AG04450 (cell line): ENCODE measurements at regions of chr2 and their contacts with region 1.

Region 1: DNA sequence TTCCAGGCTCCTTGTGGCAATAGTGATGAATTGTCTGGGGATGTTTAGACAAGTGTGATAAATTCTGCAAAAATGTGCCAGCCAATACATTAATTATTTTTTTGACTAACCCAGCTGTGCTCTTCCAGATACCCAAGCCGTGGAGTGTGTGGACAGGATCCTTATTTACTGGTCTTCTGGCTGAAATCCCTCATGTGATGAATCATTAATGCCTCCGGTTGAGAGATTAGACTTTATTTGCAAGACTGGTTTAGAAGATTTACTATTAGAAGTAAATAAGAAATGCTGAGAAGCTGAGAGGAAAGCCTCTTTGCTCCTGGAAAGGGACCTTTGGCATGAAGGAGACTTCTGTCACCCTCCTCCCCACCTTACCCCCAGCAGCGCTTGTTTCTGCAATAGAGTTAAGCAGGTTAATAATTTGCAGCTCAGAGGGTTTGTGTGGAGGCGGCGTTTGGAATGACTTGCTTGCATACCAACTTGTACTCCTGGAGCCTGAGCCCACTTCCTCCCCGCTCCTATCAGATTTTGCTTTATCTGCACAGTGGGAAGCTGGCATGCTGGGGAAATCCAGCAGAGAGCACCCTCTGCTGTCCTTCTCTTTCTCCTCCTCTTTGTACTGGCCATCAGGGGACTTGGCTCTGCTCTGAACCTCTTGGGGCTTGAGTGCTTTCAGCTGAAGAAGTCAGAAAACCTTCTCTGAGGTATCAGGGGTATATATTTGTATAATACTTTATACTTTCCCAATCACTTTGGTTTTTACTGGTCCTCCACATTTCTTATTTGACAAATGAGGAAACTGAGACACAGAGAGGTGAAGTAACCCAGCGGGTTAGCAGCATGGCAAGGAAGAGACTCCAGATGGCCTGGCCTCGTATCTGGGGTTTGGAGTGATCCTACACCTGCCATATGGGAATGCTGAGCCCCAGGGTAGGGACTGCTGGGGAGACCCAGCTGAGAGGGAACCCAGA is 16.3 kb downstream of the SLC3A1 start:
- DNase-seq: peak; percentile 41
- H3K4me3 ChIP-seq: no peak overlapping the region; the same call in 1 of the 2 replicates
- H3K27ac ChIP-seq: peak overlapping the region; percentile 24
- H3K27me3 ChIP-seq: peaks cover 15% of the 10 kb centered on the region
- CTCF ChIP-seq: peak; percentile 77

Region 2: GRCh38 chr2:44184106-44184505 is 107.5 kb before region 1 on chr2:
- CTCF ChIA-PET with region 1: no interaction called
- POLR2A ChIA-PET with region 1: no interaction called
- DNase-seq: no peak
- H3K4me3 ChIP-seq: no peak overlapping the region
- H3K27ac ChIP-seq: no peak overlapping the region
- H3K27me3 ChIP-seq: no peaks in the 10 kb centered on the region
- CTCF ChIP-seq: no peak

Region 3: GRCh38 chr2:44244129-44244871 is 47.3 kb before region 1 on chr2:
- CTCF ChIA-PET with region 1: interaction called, 11 read pairs
- POLR2A ChIA-PET with region 1: interaction called, 3 read pairs
- DNase-seq: peak; percentile 30
- H3K4me3 ChIP-seq: no peak overlapping the region
- H3K27ac ChIP-seq: no peak overlapping the region
- H3K27me3 ChIP-seq: no peaks in the 10 kb centered on the region
- CTCF ChIP-seq: peak; percentile 66

Region 4: DNA sequence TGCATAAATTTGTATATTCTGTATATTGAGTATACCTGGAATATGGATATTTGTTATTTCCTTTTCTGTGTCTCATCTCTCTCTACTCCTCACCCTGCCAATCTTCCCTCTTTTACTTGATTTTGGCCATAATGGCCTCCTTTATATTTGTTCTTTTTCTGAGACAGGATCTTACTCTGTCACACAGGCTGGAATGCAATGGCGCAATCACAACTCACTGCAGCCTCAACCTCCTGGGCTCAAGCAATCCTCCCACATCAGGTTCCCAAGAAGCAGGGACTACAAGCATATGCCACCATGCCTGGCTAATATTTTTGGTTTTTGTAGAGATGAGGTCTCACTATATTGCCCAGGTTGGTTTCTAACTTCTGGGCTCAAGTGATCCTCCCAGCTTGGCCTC is 39.2 kb after region 1 on chr2:
- CTCF ChIA-PET with region 1: no interaction called
- POLR2A ChIA-PET with region 1: no interaction called
- DNase-seq: no peak
- H3K4me3 ChIP-seq: no peak overlapping the region
- H3K27ac ChIP-seq: no peak overlapping the region
- H3K27me3 ChIP-seq: no peaks in the 10 kb centered on the region
- CTCF ChIP-seq: no peak